PC-3 (cell line): ENCODE measurements at regions of chr2 and their contacts with region 1.

Region 1: DNA sequence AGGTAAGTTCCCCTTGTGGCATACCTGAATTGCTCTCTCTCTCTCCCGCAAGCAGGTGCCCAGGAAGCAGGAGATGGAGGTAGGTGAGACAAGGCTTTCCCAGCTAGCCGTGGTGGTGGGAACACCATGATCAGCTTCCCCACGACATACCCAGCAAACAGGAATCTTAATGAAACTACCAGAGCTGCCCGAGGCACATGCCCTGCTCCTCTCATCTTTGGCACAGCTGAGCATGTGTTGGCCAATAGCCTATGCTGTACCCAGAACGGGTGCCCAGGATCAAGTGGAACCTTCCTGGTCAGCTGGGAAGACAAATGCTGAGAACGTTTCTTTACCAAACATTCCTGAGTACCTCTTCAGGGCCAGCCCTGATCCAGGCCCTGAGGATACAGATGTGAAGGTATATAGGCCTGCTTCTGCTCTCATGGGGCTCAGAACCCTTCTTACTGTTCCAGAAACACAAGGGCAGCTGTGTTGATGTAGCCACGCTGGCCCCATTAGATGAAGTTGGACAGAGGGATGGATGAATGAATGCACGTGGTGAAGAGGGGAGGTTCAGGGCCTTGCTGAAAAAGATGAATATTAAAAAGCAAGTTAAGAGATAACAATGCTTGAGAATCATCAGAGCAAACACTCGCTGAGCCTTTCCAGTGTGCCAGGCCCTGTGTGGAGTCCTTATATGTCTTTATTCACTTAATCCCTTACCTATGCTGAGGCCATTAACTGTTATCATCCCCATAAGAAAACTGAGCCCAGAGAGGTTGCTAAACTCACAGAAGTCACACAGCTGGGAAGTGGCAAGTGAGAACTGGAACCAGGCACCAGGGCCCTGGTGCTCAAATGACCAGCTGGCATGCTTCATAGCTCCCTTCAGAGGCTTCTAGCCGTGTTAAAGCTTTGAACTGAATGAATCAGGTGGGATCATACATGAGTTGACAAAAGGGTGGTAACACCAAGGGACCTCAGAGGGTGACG is 68.8 kb upstream of the TMEM247 start:
- DNase-seq: no peak
- ATAC-seq: no peak
- H3K4me3 ChIP-seq: no peak overlapping the region
- H3K27ac ChIP-seq: peak overlapping the region; percentile 99
- H3K4me1 ChIP-seq: peaks cover 71% of the 10 kb centered on the region
- H3K27me3 ChIP-seq: no peaks in the 10 kb centered on the region
- CTCF ChIP-seq: no peak

Region 2: GRCh38 chr2:46230115-46230571 is 180.4 kb before region 1 on chr2:
- CTCF ChIA-PET with region 1: no interaction called
- POLR2A ChIA-PET with region 1: no interaction called
- intact Hi-C with region 1: no loop called
- DNase-seq: no peak
- ATAC-seq: no peak; the same call in 1 of the 2 replicates
- H3K4me3 ChIP-seq: no peak overlapping the region
- H3K27ac ChIP-seq: peak overlapping the region; percentile 73
- H3K4me1 ChIP-seq: peaks cover 28% of the 10 kb centered on the region
- H3K27me3 ChIP-seq: no peaks in the 10 kb centered on the region
- CTCF ChIP-seq: no peak

Region 3: GRCh38 chr2:46306330-46306751 is 104.2 kb before region 1 on chr2:
- CTCF ChIA-PET with region 1: interaction called, 6 read pairs
- POLR2A ChIA-PET with region 1: interaction called, 16 read pairs
- intact Hi-C with region 1: loop called (anchors 5 kb)
- DNase-seq: peak; percentile 95
- ATAC-seq: peak; percentile 62
- H3K4me3 ChIP-seq: peak overlapping the region; percentile 41; the same call in 1 of the 2 replicates
- H3K27ac ChIP-seq: peak overlapping the region; percentile 93
- H3K4me1 ChIP-seq: peaks cover 78% of the 10 kb centered on the region
- H3K27me3 ChIP-seq: no peaks in the 10 kb centered on the region
- CTCF ChIP-seq: no peak

Region 4: GRCh38 chr2:46441838-46442712 is 31.5 kb after region 1 on chr2:
- CTCF ChIA-PET with region 1: no interaction called
- POLR2A ChIA-PET with region 1: no interaction called
- intact Hi-C with region 1: loop called (anchors 5 kb)
- DNase-seq: peak; percentile 17
- ATAC-seq: peak; percentile 70
- H3K4me3 ChIP-seq: no peak overlapping the region
- H3K27ac ChIP-seq: no peak overlapping the region
- H3K4me1 ChIP-seq: peaks cover 6% of the 10 kb centered on the region; the same call in 1 of the 2 replicates
- H3K27me3 ChIP-seq: no peaks in the 10 kb centered on the region
- CTCF ChIP-seq: no peak

Region 5: GRCh38 chr2:46461011-46461674 is 50.6 kb after region 1 on chr2:
- CTCF ChIA-PET with region 1: no interaction called
- POLR2A ChIA-PET with region 1: no interaction called
- intact Hi-C with region 1: loop called (anchors 2 kb)
- DNase-seq: peak; percentile 82
- ATAC-seq: peak; percentile 62
- H3K4me3 ChIP-seq: no peak overlapping the region
- H3K27ac ChIP-seq: no peak overlapping the region
- H3K4me1 ChIP-seq: peaks cover 11% of the 10 kb centered on the region
- H3K27me3 ChIP-seq: no peaks in the 10 kb centered on the region
- CTCF ChIP-seq: peak; percentile 99